GM10248 (cell line): ENCODE measurements at regions of chr2 and their contacts with region 1.

Region 1: DNA sequence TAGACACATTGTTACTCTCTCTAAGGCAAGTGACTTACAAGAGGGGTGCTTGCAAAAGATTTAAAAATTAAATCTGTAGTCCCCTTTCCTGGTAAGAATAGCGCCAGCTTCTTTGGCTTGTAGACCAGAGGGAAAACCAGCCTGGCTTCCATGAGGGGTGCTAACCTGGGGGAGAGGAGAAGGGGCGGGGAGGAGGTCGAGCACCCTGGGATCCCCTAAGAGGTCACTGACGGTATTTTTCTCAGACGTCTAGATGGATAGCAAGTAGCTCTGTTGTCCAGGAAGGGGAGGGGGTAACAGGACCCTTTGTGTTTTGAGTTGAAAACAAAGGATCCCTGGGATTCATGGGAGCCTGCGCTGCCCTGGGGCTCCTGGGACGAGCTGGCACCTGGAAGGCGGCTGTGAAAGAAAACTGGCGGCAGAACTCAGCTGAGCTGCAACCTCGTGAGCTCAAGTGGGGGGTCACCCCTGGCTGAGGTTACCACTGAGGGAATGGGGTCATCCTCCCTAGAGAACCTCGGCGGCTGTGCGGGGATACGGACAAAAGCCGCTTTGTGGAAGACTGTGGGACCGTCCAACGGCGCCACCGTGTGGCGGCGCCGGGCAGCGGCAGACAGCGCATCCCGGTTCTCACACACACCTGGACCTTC is 37.8 kb upstream of the MRPL19 start:
- DNase-seq: peak; percentile 77
- CTCF ChIP-seq: peak; percentile 97

Region 2: DNA sequence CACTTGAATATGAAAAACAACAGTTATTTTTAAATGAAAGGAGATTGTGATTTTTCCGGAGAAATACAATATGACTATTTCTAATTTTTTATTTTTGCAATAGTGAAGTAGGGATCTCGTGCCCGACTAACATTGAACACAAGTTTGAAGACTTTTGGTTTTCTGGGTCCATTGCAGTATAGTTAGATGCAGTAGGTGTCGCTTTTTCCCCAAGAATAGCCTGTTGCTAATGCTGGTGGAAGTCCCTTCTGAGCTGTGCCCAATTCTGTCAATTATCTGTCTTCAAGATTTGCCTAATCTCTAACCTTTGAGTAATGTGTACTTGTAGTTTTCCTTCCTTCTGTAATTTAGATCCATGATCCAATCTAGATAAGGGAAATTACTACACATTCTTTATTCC is 918.2 kb before region 1 on chr2:
- CTCF ChIA-PET with region 1: interaction called, 15 read pairs
- POLR2A ChIA-PET with region 1: interaction called, 6 read pairs
- DNase-seq: peak; percentile 68
- CTCF ChIP-seq: peak; percentile 75

Region 3: DNA sequence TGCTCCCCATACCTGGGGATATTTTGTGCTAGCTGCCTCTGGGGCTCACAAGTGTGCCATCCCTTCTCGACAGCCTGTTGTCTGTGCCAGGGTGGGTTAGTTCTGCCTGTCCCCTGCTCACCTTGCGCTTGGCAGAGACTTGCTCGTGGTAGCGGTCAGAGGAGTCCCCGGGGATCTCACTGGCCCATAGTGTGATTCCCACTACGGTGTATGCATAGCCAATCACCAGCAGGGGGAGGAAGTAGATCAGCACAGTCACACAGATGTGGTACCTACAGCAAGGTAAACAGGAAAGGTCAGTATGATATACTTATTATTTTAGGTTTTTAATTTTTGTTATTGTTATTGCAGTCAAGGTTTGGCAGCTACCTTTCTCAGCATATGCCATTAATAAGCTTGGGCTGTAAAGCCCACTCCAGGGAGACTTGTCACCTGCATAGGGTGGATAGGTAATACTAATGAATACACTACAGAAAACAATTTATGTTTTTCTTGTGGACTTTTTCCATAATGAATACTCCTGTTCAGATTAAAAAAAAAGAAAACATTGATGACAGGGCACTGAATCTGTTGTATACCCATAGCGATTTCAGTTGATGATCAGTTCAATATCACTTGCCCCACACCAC is 555.2 kb before region 1 on chr2:
- CTCF ChIA-PET with region 1: interaction called, 11 read pairs
- POLR2A ChIA-PET with region 1: no interaction called
- DNase-seq: peak; percentile 64
- CTCF ChIP-seq: peak; percentile 82

Region 4: DNA sequence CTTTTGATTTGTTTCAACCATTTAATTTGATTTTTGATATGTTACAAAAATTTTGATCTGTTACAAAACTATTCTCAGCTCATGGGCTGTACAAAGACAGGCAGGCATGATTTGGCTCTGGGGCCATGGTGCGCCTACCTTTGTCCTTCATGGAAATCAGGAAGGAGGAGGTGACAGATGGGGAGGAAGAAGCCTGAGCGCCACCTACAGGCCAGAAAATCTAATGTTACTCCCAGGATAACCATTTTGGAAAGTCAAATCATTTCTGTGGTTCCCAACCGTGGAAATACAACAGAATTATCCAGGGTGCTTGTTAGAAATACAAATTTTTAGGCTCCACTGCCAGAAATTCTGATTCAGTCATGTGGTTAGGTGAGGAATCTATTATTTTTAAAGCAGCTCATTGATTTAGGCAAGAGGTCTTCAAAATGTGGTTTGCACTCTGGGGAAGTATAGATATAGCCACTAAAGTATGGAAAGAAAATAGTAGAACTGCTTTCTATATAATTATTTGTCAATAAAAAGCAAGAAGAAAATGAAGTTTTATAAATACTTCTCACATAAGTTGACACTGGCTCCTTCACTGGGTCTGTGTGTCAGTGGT is 142.0 kb before region 1 on chr2:
- CTCF ChIA-PET with region 1: interaction called, 11 read pairs
- POLR2A ChIA-PET with region 1: no interaction called
- DNase-seq: peak; percentile 32
- CTCF ChIP-seq: peak; percentile 55

Region 5: DNA sequence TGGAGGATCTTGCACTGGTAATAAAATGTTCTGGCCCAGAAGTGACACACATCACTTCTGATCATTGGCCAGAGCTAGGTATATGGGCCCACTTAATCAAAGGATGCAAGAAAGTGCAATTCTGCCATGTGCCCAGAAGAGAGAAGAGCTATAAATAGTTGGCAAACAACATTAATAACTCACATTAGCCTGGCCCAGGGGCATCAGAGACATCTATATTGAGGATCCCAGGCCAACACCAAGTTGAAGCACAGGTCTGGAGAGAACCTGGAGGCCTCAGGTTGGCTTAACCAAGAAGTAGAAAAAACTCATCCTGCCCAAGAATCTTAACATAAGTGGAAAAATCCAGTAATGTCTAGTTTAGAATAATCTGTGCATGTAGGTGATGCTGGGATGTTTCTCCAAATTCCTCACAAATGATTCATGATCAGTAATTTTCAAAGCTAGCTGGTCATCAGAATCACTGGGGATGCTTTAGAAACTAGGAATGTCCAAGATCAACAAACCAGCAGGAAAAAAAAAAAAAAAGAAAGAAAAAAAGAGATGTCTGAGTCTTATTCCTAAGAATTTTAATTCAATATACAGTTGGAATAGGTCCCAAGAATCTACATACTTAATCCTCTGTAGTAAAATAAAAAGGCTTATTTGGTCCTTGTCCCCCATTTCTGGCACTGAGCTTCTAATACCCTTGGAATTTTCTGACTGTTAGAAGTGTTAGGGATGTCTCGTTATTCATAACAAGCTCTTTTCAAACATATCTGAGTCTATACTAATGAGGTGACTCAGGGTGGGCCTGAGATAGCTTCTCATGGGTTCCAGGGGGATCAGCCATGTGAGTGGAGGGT is 13.0 kb before region 1 on chr2:
- CTCF ChIA-PET with region 1: interaction called, 22 read pairs
- POLR2A ChIA-PET with region 1: no interaction called
- DNase-seq: no peak
- CTCF ChIP-seq: no peak

Region 6: DNA sequence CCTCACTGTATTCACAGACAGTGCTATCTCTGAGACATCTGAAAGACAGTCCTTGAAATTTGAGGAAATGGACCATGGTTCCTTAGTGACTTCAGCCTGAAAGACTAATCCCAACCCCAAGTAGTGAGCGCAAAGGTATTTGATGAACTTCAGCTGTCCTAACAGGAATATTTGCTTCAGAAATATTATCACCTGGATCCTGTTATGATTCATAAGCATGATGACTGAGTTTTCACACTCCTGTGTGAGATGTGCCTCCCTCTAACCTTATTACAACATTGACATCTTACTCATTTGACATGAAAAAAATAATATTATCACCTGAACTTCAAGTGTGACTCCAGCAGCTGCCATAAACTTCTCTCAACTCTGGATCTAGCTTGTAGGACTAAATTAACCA is 26.1 kb after region 1 on chr2:
- CTCF ChIA-PET with region 1: interaction called, 20 read pairs
- POLR2A ChIA-PET with region 1: no interaction called
- DNase-seq: no peak
- CTCF ChIP-seq: no peak